ENCODE measurements at regions of chr2 and their contacts with region 1.

Region 1: DNA sequence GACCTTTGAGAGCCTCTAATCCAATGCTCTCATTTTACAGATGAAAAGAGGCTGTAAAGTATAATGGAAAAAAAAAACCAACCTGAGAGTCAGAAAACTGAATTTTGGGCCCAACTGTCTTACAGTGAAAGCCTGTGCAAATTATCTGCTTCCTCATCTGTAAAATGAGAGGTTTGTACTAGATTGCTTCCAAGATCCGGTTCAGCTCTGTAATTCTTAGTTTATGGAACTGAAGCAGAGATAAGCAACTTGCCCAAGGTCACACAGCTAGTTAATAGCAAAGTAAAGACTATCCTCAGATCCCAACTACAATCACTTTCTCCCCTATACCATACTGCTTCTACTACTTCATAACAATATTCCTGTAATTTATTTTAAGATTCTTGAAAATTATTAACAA is 6.3 kb downstream of the TLK1 start:
- DNase-seq: no peak
- ATAC-seq: peak; percentile 27
- H3K4me3 ChIP-seq: peak overlapping the region; percentile 22
- H3K27ac ChIP-seq: peak overlapping the region; percentile 68
- H3K4me1 ChIP-seq: peaks cover 14% of the 10 kb centered on the region
- H3K27me3 ChIP-seq: no peaks in the 10 kb centered on the region
- CTCF ChIP-seq: no peak
- EP300 ChIP-seq: no peak
- POLR2A ChIP-seq: no peak
- RAD21 ChIP-seq: no peak

Region 2: DNA sequence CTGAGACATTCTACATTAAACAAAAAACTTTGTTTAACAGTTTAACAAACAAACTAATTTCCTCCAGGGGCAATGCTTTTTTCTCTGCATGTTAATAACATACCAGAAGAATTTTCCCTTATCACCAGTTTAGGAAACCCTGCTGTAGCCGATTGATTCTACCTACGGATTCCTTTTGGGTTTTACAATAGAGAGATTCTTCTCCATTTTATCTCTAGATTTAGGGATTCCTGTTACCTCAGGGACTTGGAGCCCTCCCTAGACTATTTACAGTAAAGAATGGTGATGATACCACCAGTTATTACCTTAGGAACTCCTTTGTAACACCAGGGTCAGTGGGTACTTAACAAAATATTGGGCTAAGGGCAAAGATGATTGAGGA is 389.5 kb before region 1 on chr2:
- CTCF ChIA-PET with region 1: no interaction called
- POLR2A ChIA-PET with region 1: no interaction called
- RAD21 ChIA-PET with region 1: no interaction called
- SMC1A ChIA-PET with region 1: no interaction called
- in situ Hi-C with region 1: no loop called
- intact Hi-C with region 1: no loop called
- DNase-seq: no peak
- ATAC-seq: no peak; the same call in 2 of the 3 replicates
- H3K4me3 ChIP-seq: no peak overlapping the region
- H3K27ac ChIP-seq: peak overlapping the region; percentile 24; the same call in 1 of the 2 replicates
- H3K4me1 ChIP-seq: peaks cover 8% of the 10 kb centered on the region; the same call in 1 of the 2 replicates
- H3K27me3 ChIP-seq: no peaks in the 10 kb centered on the region
- CTCF ChIP-seq: no peak
- EP300 ChIP-seq: no peak
- POLR2A ChIP-seq: no peak
- RAD21 ChIP-seq: no peak

Region 3: DNA sequence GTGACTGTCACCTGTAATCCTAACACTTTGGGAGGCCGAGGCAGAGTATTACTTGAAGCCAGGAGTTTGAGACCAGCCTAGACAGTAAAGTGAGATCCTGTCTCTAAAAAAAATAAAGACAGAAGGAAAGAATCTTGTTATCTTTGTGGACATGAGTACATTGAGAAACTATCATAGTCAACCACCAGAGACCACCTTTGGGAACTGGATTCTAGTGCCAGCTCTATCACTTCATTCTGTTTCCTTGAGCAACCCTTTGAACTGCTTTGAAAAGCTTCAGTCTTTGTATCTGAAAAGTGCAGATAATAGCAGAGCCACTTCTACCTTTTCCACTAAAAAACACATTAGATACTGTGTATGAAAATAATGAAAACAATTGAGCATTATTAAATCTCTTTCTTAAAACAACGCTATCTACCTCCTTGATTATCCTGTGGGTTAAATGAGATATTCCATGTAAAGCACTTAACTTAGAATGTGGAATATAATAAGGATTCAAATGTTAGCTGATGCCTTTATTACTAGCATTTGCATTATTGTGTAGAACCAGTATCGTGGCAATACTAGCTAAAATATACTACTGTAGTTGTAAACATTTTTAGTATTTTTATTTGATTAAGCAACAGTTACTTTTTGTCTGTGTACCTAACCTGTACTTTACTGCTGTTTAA is 216.5 kb before region 1 on chr2:
- CTCF ChIA-PET with region 1: no interaction called
- POLR2A ChIA-PET with region 1: no interaction called
- RAD21 ChIA-PET with region 1: no interaction called
- SMC1A ChIA-PET with region 1: no interaction called
- in situ Hi-C with region 1: no loop called
- intact Hi-C with region 1: no loop called
- DNase-seq: no peak
- ATAC-seq: no peak
- H3K4me3 ChIP-seq: no peak overlapping the region
- H3K27ac ChIP-seq: no peak overlapping the region
- H3K4me1 ChIP-seq: 0 out of 2 replicates have a peak, but pooled peaks cover 2% of the 10 kb centered on the region
- H3K27me3 ChIP-seq: no peaks in the 10 kb centered on the region
- CTCF ChIP-seq: no peak
- EP300 ChIP-seq: no peak
- POLR2A ChIP-seq: no peak
- RAD21 ChIP-seq: no peak

Region 4: DNA sequence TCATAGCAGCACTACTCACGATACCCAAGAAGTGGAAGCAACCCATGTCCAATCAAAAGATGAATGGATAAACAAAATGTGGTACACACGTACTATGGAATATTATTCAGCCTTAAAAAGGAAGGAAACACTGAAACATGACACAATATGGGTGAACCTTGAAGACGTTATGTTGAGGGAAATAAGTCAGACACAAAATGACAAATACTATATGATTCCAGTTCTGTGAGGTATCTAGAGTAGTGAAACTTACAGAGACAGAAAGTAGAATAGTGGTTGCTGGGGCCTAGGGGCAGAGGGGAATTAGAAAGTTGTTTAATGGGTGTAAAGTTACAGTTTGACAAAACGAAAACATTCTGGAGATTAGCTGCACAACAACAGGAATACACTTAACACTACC is 18.3 kb before region 1 on chr2:
- CTCF ChIA-PET with region 1: interaction called, 10 read pairs
- POLR2A ChIA-PET with region 1: interaction called, 11 read pairs
- RAD21 ChIA-PET with region 1: interaction called, 16 read pairs
- SMC1A ChIA-PET with region 1: interaction called, 69 read pairs
- in situ Hi-C with region 1: no loop called
- intact Hi-C with region 1: loop called (anchors 2 kb)
- DNase-seq: peak; percentile 62
- ATAC-seq: peak; percentile 91
- H3K4me3 ChIP-seq: no peak overlapping the region
- H3K27ac ChIP-seq: peak overlapping the region; percentile 69
- H3K4me1 ChIP-seq: peaks cover 28% of the 10 kb centered on the region
- H3K27me3 ChIP-seq: no peaks in the 10 kb centered on the region
- CTCF ChIP-seq: no peak
- EP300 ChIP-seq: no peak
- POLR2A ChIP-seq: no peak
- RAD21 ChIP-seq: no peak

Region 5: DNA sequence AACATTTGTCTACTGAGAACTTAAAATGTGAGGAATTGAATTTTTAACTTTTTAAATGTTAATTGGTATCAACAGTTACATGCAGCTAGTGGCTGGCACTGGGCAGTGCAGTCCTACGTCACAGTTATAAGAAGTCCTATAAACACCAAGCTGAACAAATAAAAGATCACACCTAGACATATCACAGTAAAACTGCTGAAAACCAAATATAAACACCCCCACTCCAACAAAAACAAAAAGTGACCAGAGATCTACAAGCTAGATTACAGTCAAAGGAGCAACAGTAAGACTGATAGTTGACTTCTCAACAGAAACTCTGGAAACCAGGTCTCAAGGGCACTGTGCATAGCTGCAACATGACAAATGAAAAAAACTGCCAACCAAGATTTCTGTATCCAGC is 13.0 kb before region 1 on chr2:
- CTCF ChIA-PET with region 1: interaction called, 21 read pairs
- POLR2A ChIA-PET with region 1: interaction called, 11 read pairs
- RAD21 ChIA-PET with region 1: interaction called, 16 read pairs
- SMC1A ChIA-PET with region 1: interaction called, 69 read pairs
- in situ Hi-C with region 1: no loop called
- intact Hi-C with region 1: loop called (anchors 2 kb)
- DNase-seq: no peak
- ATAC-seq: peak; percentile 61
- H3K4me3 ChIP-seq: no peak overlapping the region
- H3K27ac ChIP-seq: no peak overlapping the region
- H3K4me1 ChIP-seq: peaks cover 29% of the 10 kb centered on the region; the same call in 1 of the 2 replicates
- H3K27me3 ChIP-seq: no peaks in the 10 kb centered on the region
- CTCF ChIP-seq: peak in 1 of 3 experiments; percentile 14; a peak in 1 of 6 replicates
- EP300 ChIP-seq: no peak
- POLR2A ChIP-seq: no peak
- RAD21 ChIP-seq: no peak

Measured in GM12878 (cell line).